ENCODE measurements at regions of chr4 and their contacts with region 1.

Region 1: GRCh38 chr4:2878346-2878745 is 34.7 kb downstream of the ADD1 start:
- DNase-seq: no peak
- ATAC-seq: peak in 1 of 8 donors; percentile 31
- H3K4me3 ChIP-seq: no peak overlapping the region
- H3K27ac ChIP-seq: peak overlapping the region in 3 of 10 donors; percentile 1 to 24 (median 10)
- H3K4me1 ChIP-seq: peaks cover 4 to 63% (median 29%) of the 10 kb centered on the region in 9 donors
- H3K27me3 ChIP-seq: no peaks in the 10 kb centered on the region
- CTCF ChIP-seq: no peak

Region 2: GRCh38 chr4:2923141-2923551 is 44.8 kb after region 1 on chr4:
- intact Hi-C with region 1: loop called in 1 of 10 experiments (anchors 5 kb)
- DNase-seq: no peak
- ATAC-seq: no peak
- H3K4me3 ChIP-seq: no peak overlapping the region
- H3K27ac ChIP-seq: peak overlapping the region in 3 of 10 donors; percentile 3 to 39 (median 36)
- H3K4me1 ChIP-seq: peaks cover 0 to 14% (median 3%) of the 10 kb centered on the region in 9 donors
- H3K27me3 ChIP-seq: no peaks in the 10 kb centered on the region
- CTCF ChIP-seq: no peak

Region 3: DNA sequence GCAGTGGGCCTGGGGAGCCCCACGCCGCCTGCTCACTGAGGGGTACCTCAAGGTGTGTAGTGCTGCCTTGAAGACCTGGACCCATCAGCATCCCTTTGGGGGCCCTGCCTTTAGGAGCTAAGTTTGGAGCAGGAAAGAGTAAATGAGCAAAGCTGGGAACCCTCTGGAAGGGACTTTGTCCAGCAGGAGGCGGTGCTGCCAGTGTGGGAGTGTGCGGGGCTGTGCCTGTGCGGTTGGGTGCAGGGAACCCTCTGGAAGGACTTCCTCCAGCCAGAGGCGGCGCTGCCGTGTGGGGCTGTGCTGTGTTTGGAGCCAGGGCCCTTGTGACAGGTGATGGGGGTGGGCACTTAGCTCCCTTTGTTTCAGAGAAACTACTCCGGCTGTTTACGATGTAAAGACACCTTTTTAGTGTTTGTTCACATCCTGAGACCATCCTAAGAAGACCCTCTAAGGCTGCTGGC is 440.2 kb after region 1 on chr4:
- intact Hi-C with region 1: no loop called
- DNase-seq: no peak
- ATAC-seq: no peak
- H3K4me3 ChIP-seq: no peak overlapping the region
- H3K27ac ChIP-seq: no peak overlapping the region
- H3K4me1 ChIP-seq: peaks cover 4 to 46% (median 27%) of the 10 kb centered on the region in 9 donors
- H3K27me3 ChIP-seq: no peaks in the 10 kb centered on the region
- CTCF ChIP-seq: peak in 2 of 9 donors; percentile 6 to 18